ENCODE measurements at regions of chr6 and their contacts with region 1.

Region 1: GRCh38 chr6:73461537-73462350 is at the start of gene MTO1:
- DNase-seq: peak; percentile 72 to 95 (median 80)
- ATAC-seq: peak; percentile 91
- H3K4me3 ChIP-seq: peak within 1 kb of the TSS; percentile 81
- H3K4me3 Mint-ChIP-seq: peak within 1 kb of the TSS; percentile 98
- H3K27ac ChIP-seq: peak within 1 kb of the TSS; percentile 88 to 95
- H3K27ac Mint-ChIP-seq: peak within 1 kb of the TSS; percentile 95
- H3K4me1 ChIP-seq: peaks cover 53% of the 10 kb centered on the region
- H3K4me1 Mint-ChIP-seq: peaks cover 47% of the 10 kb centered on the region
- H3K27me3 ChIP-seq: no peaks in the 10 kb centered on the region
- H3K27me3 Mint-ChIP-seq: no peaks in the 10 kb centered on the region
- CTCF ChIP-seq: no peak
- total RNA-seq, gene MTO1: 47.9 to 48.0 TPM

Region 2: GRCh38 chr6:73394577-73395354 is 67.0 kb before region 1 on chr6 and contains the start of gene DDX43:
- CTCF ChIA-PET with region 1: no interaction called
- POLR2A ChIA-PET with region 1: interaction called, 16 read pairs
- intact Hi-C with region 1: no loop called
- DNase-seq: peak in 10 of 14 experiments; percentile 18 to 78 (median 49)
- ATAC-seq: peak; percentile 88
- H3K4me3 ChIP-seq: peak within 1 kb of the TSS; percentile 42
- H3K4me3 Mint-ChIP-seq: peak within 1 kb of the TSS; percentile 92
- H3K27ac ChIP-seq: peak within 1 kb of the TSS in 1 of 2 donors; percentile 64
- H3K27ac Mint-ChIP-seq: peak within 1 kb of the TSS; percentile 96
- H3K4me1 ChIP-seq: peaks cover 14% of the 10 kb centered on the region
- H3K4me1 Mint-ChIP-seq: peaks cover 21% of the 10 kb centered on the region
- H3K27me3 ChIP-seq: no peaks in the 10 kb centered on the region
- H3K27me3 Mint-ChIP-seq: no peaks in the 10 kb centered on the region
- CTCF ChIP-seq: no peak
- total RNA-seq, gene DDX43: 2.2 to 2.5 TPM

Region 3: DNA sequence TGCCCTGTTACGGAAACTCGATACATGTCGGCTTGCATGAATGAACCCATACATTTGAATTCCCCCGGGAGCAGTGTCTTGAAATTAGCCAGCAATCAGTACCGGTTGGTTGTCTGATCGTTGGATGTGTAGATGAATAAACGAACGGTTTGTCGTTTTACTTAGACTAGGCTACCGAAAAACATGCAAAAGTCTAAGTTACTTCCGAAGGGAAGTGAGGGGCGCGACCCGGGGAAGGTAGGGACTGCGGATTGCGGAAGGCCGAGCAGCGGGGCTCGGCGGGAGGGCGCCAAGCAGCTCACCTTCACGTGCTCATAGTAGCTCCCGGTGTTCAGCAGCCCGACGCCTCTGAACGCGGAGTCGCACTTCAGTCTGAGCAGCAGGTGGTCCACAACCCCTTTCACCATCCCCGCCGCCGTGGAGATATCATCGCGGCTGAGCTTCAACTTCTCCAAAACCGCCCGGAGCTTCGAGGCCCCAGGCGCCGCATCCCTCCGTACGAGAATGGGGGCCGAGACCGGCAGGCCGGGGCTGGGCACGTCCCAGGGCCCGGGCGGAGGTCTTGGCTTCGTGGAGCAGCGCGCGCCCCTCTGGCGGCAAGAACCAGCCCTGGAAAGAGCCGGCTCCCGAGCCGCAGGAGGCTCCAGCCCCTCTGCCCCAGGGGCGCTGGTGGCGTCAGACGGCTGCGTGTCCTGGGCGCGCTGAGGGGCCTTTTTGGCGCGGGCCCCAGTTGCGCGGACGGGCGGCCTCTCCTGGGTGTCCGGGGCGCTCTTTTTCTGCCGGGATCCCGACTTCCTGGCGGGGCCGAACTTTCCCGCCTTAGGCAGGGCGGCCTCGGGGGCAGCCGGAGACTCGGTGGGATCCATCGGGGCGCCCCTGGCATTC is 10.3 kb before region 1 on chr6:
- CTCF ChIA-PET with region 1: interaction called, 15 read pairs
- POLR2A ChIA-PET with region 1: interaction called, 103 read pairs
- intact Hi-C with region 1: loop called in 1 of 2 experiments (anchors 2 kb)
- DNase-seq: peak; percentile 9 to 74 (median 31)
- ATAC-seq: peak; percentile 53
- H3K4me3 ChIP-seq: peak overlapping the region; percentile 87
- H3K4me3 Mint-ChIP-seq: peak overlapping the region; percentile 92
- H3K27ac ChIP-seq: peak overlapping the region; percentile 69 to 85
- H3K27ac Mint-ChIP-seq: peak overlapping the region; percentile 86
- H3K4me1 ChIP-seq: peaks cover 54% of the 10 kb centered on the region
- H3K4me1 Mint-ChIP-seq: peaks cover 32% of the 10 kb centered on the region
- H3K27me3 ChIP-seq: no peaks in the 10 kb centered on the region
- H3K27me3 Mint-ChIP-seq: no peaks in the 10 kb centered on the region
- CTCF ChIP-seq: no peak

Region 4: GRCh38 chr6:73503027-73503772 is 41.5 kb after region 1 on chr6:
- CTCF ChIA-PET with region 1: no interaction called
- POLR2A ChIA-PET with region 1: interaction called, 3 read pairs
- intact Hi-C with region 1: loop called in 1 of 2 experiments (anchors 5 kb)
- DNase-seq: no peak
- ATAC-seq: no peak
- H3K4me3 ChIP-seq: no peak overlapping the region
- H3K4me3 Mint-ChIP-seq: no peak overlapping the region
- H3K27ac ChIP-seq: no peak overlapping the region
- H3K27ac Mint-ChIP-seq: peak overlapping the region; percentile 42
- H3K4me1 ChIP-seq: no peaks in the 10 kb centered on the region
- H3K4me1 Mint-ChIP-seq: no peaks in the 10 kb centered on the region
- H3K27me3 ChIP-seq: no peaks in the 10 kb centered on the region
- H3K27me3 Mint-ChIP-seq: no peaks in the 10 kb centered on the region
- CTCF ChIP-seq: no peak

Region 5: GRCh38 chr6:73520688-73521350 is 59.1 kb after region 1 on chr6 and contains the start of gene EEF1A1:
- CTCF ChIA-PET with region 1: interaction called, 3 read pairs
- POLR2A ChIA-PET with region 1: interaction called, 88 read pairs
- intact Hi-C with region 1: loop called (anchors 2 to 5 kb)
- DNase-seq: peak; percentile 98 to 100 (median 99)
- ATAC-seq: peak; percentile 81
- H3K4me3 ChIP-seq: peak within 1 kb of the TSS; percentile 90
- H3K4me3 Mint-ChIP-seq: peak within 1 kb of the TSS; percentile 94
- H3K27ac ChIP-seq: peak within 1 kb of the TSS; percentile 99
- H3K27ac Mint-ChIP-seq: peak within 1 kb of the TSS; percentile 97
- H3K4me1 ChIP-seq: peaks cover 64% of the 10 kb centered on the region
- H3K4me1 Mint-ChIP-seq: peaks cover 74% of the 10 kb centered on the region
- H3K27me3 ChIP-seq: no peaks in the 10 kb centered on the region
- H3K27me3 Mint-ChIP-seq: no peaks in the 10 kb centered on the region
- CTCF ChIP-seq: no peak
- total RNA-seq, gene EEF1A1: 15,669 to 16,465 TPM

Region 6: GRCh38 chr6:73653571-73654424 is 192.1 kb after region 1 on chr6 and contains the start of gene SLC17A5:
- CTCF ChIA-PET with region 1: interaction called, 4 read pairs
- POLR2A ChIA-PET with region 1: interaction called, 38 read pairs
- intact Hi-C with region 1: loop called in 1 of 2 experiments (anchors 5 kb)
- DNase-seq: peak; percentile 71 to 95 (median 87)
- ATAC-seq: peak; percentile 85
- H3K4me3 ChIP-seq: peak within 1 kb of the TSS; percentile 94
- H3K4me3 Mint-ChIP-seq: peak within 1 kb of the TSS; percentile 99
- H3K27ac ChIP-seq: peak within 1 kb of the TSS; percentile 93 to 99
- H3K27ac Mint-ChIP-seq: peak within 1 kb of the TSS; percentile 95
- H3K4me1 ChIP-seq: peaks cover 15% of the 10 kb centered on the region
- H3K4me1 Mint-ChIP-seq: peaks cover 42% of the 10 kb centered on the region
- H3K27me3 ChIP-seq: no peaks in the 10 kb centered on the region
- H3K27me3 Mint-ChIP-seq: no peaks in the 10 kb centered on the region
- CTCF ChIP-seq: no peak
- total RNA-seq, gene SLC17A5: 5.3 to 6.2 TPM

Measured in CD4-positive, alpha-beta T cell (primary cell).